ENCODE measurements at regions of chr11 and their contacts with region 1.

Region 1: DNA sequence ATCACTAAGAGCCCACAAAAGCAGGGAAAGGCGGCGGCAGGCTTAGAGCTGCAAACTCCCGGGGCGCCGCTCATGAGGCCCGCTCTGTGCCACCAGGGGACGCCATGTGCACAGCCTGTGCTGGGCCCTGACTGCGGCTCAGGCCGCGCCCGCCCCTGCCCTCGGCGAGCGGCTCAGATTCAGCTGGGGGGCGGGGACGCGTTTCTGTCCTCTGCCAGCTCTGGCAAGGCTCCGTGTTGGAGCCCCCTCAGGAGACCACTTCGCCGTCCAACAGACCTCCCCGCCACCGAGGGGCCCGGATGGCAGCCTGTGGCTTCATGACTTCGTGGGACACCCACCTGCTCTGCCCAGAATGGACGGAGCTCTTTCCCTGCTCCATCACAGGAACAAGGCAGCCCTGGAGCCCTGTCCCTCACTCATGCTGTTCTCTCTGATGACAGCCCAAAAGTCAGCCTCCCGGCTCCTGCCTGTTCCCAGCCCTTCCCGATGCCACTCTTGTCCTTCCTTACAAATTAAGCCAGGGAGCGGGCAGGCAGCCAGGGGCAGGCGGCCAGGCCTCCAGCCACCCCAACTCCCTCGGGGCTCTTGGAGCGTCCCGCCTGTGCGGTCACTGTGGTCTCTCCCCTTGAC is 69.1 kb downstream of the NAT10 start:
- DNase-seq: peak; percentile 81
- H3K27ac ChIP-seq: peak overlapping the region; percentile 37
- CTCF ChIP-seq: peak; percentile 97

Region 2: DNA sequence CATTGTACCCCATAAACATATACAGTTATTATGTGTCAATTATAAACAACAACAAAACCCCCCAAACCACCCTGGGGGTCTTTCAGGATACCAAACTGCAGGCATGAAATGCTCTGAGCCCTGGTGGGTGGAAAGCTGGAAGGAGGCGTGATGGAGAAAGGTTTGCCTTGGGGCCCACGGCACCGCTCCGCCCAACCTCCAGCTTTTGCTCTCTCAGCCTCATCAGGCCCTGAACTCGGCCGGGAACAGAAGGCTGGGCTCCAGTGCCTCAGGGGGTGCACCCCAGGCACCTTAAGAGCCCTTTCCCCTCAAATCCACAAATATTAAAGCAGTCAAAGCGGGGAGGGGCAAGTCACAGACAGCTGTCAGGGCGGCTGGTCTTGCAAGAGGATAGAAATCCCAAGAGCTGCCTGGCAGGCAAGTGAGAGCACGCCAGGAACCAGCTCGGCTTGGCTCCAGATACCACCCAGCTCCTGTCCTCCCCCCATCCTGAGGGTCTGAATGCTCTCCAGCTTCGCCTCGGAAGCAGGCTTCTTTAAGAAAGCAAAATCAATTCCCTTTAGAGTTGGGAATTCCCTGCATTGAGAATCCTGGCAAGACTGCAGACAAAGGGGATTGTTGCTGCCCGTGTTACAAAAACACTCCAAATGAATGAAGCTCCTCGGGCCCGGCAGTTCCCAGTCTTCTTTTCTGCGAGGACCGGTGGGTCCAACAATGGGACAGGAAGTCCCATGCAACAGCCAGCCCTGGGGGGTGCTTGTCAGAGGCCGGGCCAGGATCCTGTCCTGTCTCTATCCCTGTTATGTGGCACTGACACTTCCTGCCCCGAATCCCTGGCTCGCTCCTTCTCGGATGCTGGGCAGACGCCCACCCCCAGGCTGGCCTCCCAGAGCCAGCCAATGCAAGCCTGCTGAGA is 11.7 kb after region 1 on chr11:
- CTCF ChIA-PET with region 1: interaction called, 20 read pairs
- POLR2A ChIA-PET with region 1: no interaction called
- DNase-seq: no peak
- H3K27ac ChIP-seq: peak overlapping the region; percentile 78
- CTCF ChIP-seq: no peak

Region 3: GRCh38 chr11:34344768-34345539 is 170.4 kb after region 1 on chr11:
- CTCF ChIA-PET with region 1: interaction called, 18 read pairs
- POLR2A ChIA-PET with region 1: no interaction called
- DNase-seq: peak; percentile 85
- H3K27ac ChIP-seq: peak overlapping the region; percentile 75
- CTCF ChIP-seq: no peak

Region 4: DNA sequence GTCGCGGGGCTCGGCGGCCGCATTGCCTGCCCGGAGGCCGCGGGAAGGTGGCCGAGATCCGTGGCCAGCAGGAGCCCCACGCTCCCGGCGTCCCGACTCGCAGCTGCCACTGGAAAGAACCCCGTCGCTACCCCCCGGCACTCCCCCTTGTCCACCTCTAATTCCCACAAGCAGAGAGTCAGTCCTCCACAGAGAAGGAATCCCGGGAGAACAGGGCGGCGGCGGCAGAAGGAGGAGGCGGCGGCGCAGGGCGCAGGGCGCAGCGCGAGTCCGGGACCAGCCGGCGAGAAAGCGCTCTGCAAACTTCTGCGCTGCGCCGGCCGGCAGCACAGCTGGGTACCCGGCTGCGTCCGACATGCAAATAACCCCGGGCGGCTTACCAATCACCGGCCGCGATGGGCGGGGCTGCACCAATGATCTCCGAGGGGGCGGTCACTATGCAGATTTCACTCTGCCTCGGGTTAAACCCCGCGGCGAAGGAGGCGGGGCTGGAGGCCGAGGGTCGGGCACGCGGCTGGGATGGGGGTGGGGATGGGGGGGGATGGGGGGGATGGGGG is 183.3 kb after region 1 on chr11 and contains the start of gene ABTB2:
- CTCF ChIA-PET with region 1: interaction called, 39 read pairs
- POLR2A ChIA-PET with region 1: interaction called, 6 read pairs
- DNase-seq: peak; percentile 97
- H3K27ac ChIP-seq: peak within 1 kb of the TSS; percentile 92
- CTCF ChIP-seq: no peak

Region 5: DNA sequence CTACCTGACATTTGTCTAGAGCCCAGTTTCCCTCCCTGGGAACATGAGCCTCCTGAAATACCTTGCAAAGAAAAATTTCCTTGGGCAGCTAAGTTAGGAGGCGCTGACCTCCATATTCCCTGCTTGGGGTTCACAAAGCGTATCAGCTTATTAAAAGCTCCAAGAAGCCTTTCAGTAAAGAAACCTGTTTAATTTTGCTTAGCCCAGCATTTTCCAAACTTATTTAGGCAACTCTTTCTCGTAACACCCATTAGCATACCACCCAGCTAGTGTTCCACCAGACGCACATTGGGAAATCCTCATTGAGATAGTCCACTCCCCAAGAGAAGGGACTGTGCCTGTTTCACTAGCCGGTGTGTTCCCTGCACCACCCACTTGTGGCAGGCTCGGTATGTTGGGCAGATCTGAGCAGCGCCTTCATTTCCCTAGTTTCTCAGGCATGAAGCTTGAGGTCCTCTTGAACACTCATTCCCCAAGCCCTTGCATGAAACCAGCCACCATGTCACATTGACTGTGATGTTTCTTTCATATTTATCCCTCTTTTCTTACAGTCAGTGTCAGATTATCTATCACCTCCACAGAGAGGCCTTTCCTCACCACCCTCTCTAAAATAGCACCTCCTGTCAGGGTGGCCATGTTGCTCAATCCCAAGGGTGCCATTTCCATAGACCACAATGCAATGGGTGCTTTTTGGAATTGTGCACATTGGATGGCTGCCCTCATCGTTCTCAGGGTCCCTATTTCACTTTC is 351.5 kb after region 1 on chr11:
- CTCF ChIA-PET with region 1: no interaction called
- POLR2A ChIA-PET with region 1: no interaction called
- DNase-seq: no peak
- H3K27ac ChIP-seq: no peak overlapping the region
- CTCF ChIP-seq: no peak

Measured in RWPE1 (cell line).